ENCODE measurements at regions of chr7 and their contacts with region 1.

Region 1: GRCh38 chr7:140326116-140326928 is 72.0 kb downstream of the SLC37A3 start:
- DNase-seq: peak; percentile 67 to 79
- ATAC-seq: peak; percentile 95
- H3K4me3 ChIP-seq: no peak overlapping the region
- H3K27ac ChIP-seq: 0 out of 6 replicates have a peak overlapping the region, but pooled peaks of 1 of the 2 experiments have one; percentile 52
- H3K4me1 ChIP-seq: no peaks in the 10 kb centered on the region
- CTCF ChIP-seq: peak; percentile 90
- EP300 ChIP-seq: no peak
- POLR2A ChIP-seq: no peak
- RAD21 ChIP-seq: peak; percentile 95 to 96

Region 2: DNA sequence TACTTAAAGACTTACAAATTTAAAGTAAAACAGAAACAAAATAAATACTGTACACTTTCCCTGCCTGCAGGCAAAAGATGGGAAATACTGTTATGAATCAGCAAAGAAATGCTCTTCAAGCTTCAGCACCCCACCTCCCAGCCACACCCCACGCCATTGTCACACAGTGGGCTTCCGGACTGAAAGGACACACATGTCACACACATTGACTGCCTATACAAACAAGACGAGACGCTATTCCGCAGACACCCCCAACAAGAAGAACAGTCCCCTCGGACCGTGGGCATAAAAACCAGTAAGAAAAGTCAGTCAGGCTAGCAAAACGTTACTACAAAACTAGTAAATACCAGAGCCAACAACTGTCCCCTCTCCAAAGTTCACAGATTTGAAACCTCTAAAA is 241.3 kb before region 1 on chr7:
- CTCF ChIA-PET with region 1: interaction called, 15 read pairs
- POLR2A ChIA-PET with region 1: no interaction called
- DNase-seq: no peak
- ATAC-seq: no peak
- H3K4me3 ChIP-seq: no peak overlapping the region
- H3K27ac ChIP-seq: no peak overlapping the region
- H3K4me1 ChIP-seq: no peaks in the 10 kb centered on the region
- CTCF ChIP-seq: no peak
- EP300 ChIP-seq: no peak
- POLR2A ChIP-seq: no peak
- RAD21 ChIP-seq: no peak

Region 3: DNA sequence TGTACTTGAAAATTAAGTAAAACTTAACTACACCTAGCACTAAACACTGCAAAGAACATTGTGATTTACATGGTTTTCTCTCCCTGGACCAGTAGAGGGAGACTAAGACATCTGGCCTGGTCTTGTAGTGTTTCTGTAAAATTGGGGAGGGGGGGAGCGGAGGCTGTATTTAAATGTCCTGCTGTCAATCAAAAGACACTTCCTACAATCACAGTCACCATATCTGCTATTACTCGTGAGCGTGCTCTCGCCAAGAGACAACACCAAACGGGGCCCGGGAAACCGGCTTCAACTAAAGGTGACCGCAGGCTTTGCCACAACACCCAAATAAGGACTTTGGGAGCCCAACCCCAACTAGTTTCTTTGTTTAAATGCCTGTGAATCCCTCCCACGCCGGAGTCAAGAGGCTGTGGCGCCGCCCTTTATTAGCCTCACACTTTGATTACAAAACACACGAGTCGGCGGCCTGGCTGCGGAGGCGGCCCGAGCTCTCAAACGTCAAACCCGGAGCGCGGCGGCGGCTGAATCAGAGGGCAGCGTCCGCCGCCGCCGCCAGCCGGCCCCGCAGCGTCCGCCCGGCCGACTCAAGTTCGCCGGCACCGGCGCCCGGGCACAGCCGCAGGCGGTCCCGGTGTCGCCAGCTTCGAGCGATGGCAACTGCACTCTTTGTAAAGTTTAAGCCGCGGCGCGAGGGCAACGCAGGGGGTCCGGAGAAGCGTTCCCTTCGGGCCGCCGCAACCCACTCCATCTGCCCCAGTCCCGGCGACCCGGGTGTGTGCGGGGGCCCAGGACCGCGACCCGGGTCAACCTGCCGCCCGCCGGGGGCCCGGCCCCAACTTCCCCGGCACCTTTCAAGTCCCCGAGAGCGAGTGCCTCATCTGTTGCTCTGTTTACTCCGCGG is 150.9 kb before region 1 on chr7:
- CTCF ChIA-PET with region 1: interaction called, 55 read pairs
- POLR2A ChIA-PET with region 1: interaction called, 5 read pairs
- DNase-seq: peak; percentile 86 to 94
- ATAC-seq: peak; percentile 72 to 81
- H3K4me3 ChIP-seq: peak overlapping the region; percentile 92
- H3K27ac ChIP-seq: peak overlapping the region; percentile 87 to 91
- H3K4me1 ChIP-seq: peaks cover 11% of the 10 kb centered on the region; the same call in 1 of the 3 replicates
- CTCF ChIP-seq: peak; percentile 86
- EP300 ChIP-seq: no peak
- POLR2A ChIP-seq: no peak
- RAD21 ChIP-seq: peak; percentile 85 to 86

Region 4: GRCh38 chr7:140304191-140304799 is 22.0 kb before region 1 on chr7:
- CTCF ChIA-PET with region 1: interaction called, 17 read pairs
- POLR2A ChIA-PET with region 1: no interaction called
- DNase-seq: peak in 1 of 2 experiments; percentile 37
- ATAC-seq: peak; percentile 65 to 83; a peak in 4 of 6 replicates
- H3K4me3 ChIP-seq: no peak overlapping the region
- H3K27ac ChIP-seq: no peak overlapping the region
- H3K4me1 ChIP-seq: peaks cover 11% of the 10 kb centered on the region; the same call in 1 of the 3 replicates
- CTCF ChIP-seq: peak; percentile 58
- EP300 ChIP-seq: no peak
- POLR2A ChIP-seq: no peak
- RAD21 ChIP-seq: peak; percentile 64 to 65

Region 5: DNA sequence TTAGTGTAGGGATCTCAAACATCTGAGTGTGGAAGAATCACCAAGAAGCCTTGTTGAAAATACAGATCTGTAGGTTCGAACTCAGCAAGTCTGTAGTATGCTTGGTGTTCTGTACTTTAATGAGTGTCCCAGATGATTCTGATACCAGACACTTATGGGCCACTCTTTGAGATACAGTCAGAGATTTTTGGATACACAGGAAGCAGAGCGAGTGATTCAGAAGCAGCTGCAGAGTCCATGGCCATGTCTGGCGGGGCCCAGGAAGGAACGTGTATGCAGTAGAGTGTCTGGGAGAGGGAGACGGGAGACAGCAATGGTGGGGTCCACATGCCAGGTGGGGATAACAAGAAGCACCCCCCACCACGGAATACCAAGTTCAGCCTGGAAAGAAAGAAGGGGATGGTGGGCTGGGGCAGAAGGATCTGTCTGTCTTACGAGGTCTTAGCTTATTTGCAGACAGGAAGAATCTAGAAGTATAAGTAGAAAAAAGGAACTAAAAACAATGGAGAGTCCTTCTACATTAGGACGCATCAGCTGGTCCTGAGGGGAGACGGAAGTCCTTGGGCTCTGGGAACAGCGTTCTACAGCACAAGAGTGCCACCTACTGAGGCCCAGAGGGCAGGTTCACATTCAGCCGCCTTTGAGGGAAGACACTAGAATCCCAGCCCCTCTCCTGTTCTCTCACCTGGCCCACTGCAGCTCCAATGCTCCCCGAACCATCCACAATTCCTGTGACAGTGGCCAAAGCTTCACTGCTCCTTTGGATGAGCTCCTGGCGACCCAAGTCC is 16.6 kb after region 1 on chr7:
- CTCF ChIA-PET with region 1: interaction called, 15 read pairs
- POLR2A ChIA-PET with region 1: no interaction called
- DNase-seq: peak; percentile 16 to 42
- ATAC-seq: peak; percentile 77 to 87; a peak in 5 of 6 replicates
- H3K4me3 ChIP-seq: no peak overlapping the region
- H3K27ac ChIP-seq: no peak overlapping the region
- H3K4me1 ChIP-seq: no peaks in the 10 kb centered on the region
- CTCF ChIP-seq: peak; percentile 53
- EP300 ChIP-seq: no peak
- POLR2A ChIP-seq: no peak
- RAD21 ChIP-seq: peak; percentile 54 to 68; a peak in 4 of 5 replicates

Region 6: DNA sequence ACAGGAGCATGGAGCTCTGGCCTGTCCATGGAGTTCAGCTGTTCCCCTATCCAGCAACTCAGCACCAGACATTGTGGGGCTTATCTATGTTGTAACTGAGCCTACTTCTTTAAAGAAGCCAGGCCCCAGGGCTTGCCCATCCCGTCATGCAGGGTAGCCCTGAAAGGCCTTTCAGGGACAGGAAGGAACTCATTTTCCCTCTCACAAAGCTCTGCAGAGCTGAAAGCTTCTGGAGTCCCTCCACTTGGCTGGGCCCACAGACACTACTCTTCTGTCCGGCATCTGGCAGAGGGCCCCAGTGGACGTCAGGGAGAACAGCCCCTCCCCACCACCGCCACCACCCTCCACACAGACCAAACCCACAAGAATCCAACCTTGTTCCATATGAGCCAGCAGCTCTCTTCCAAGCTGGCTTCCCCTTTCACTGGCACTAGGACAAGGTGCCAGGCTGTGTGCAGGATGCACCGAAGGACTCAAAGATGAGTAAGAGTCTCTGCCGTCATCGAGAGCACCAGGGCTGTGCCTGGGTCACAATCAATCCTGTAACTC is 281.2 kb after region 1 on chr7:
- CTCF ChIA-PET with region 1: no interaction called
- POLR2A ChIA-PET with region 1: no interaction called
- DNase-seq: no peak
- ATAC-seq: no peak
- H3K4me3 ChIP-seq: no peak overlapping the region
- H3K27ac ChIP-seq: no peak overlapping the region
- H3K4me1 ChIP-seq: peaks cover 16% of the 10 kb centered on the region
- CTCF ChIP-seq: no peak
- EP300 ChIP-seq: no peak
- POLR2A ChIP-seq: no peak
- RAD21 ChIP-seq: no peak

Measured in A549 (cell line).